Activated CD4-positive, alpha-beta T cell treated with anti-CD3 and anti-CD28 coated beads, Interleukin-2, amount 10 ng/mL, durations not matched to agents 24 days and 14 days (primary cell): ENCODE measurements at regions of chr12 and their contacts with region 1.

Region 1: DNA sequence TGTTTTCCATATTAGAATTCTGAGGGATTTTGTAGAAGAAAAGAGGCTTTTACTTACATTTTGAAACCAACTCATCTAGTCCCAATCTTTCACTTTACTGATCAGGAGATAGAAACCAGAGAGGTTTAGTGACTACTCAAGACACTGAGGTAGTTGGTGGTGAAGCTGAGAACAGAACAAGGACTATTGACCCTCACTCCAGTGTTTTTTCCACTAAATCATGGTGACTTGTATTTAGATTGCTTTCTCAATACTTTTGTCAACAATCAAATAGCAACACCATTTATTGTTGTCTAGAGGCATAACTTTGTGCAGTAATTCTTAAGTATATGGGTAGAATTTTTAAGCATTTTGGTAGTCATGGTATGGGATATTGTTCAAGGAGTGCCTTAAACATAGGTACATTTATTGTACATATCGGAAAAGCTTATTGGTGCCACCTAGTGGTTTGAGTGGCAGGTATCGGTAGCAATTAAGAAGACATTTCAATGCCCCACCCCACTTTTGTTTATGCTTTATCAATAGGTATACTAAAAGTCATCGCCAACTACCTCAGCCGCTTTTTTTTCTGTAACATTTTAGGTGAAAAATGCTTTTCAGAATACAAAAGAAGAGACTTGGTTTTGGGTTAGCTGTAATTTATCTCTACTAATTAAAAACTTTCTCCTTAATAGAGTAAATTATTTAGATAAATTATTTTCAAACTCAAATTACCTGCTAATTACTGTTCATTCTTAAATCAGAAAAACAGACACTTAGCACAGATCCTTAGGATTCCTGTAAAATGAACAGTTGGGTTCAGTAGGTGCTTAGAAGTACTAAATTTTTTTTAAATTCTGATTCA is 47.3 kb upstream of the PAWR start:
- DNase-seq: peak; percentile 76
- H3K4me3 Mint-ChIP-seq: no peak overlapping the region
- H3K27ac Mint-ChIP-seq: no peak overlapping the region
- H3K4me1 Mint-ChIP-seq: no peaks in the 10 kb centered on the region
- H3K27me3 Mint-ChIP-seq: peaks cover 5% of the 10 kb centered on the region

Region 2: DNA sequence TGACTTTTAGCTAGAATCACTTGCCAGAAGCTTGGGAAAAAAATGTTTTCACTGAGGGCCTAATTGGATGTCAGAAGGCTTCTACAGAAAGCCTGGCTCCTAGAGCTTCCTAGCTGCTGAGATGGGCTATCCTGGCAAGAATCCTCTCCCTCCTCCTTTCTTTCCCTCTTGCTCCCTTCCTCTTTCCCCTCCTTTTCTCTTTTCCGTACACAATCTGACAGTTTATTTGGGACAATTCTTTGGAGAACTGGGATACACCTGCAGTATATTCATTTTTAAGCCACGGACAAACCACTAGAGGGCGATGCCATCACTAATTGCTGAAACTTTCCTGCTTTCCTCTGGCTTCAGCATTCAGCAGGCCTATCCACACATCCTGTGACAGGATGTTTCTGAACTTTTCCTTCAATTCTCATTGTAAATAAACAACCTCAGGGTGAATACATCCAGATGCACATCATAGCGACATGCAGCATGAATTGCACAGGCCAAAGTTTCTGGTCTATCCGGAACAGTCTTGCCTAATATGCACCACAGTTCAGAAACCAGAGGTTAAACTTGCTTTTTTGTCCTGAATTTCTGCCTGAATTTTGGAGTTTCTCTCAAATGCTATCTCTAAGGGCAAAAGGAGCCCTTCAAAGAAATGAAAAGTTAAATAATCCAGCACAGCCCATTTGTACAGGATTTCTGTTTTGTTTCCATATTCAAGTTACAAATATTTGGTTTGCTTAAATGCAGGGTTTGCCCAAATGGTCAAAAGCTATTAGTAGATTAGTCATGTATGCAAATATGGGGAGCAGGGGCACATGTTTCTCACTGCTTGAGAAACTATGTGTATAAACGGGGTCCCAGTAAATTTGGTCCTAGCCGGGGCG is 190.1 kb before region 1 on chr12:
- intact Hi-C with region 1: loop called (anchors 2 kb)
- DNase-seq: peak; percentile 66
- H3K4me3 Mint-ChIP-seq: no peak overlapping the region
- H3K27ac Mint-ChIP-seq: no peak overlapping the region
- H3K4me1 Mint-ChIP-seq: no peaks in the 10 kb centered on the region
- H3K27me3 Mint-ChIP-seq: no peaks in the 10 kb centered on the region

Region 3: DNA sequence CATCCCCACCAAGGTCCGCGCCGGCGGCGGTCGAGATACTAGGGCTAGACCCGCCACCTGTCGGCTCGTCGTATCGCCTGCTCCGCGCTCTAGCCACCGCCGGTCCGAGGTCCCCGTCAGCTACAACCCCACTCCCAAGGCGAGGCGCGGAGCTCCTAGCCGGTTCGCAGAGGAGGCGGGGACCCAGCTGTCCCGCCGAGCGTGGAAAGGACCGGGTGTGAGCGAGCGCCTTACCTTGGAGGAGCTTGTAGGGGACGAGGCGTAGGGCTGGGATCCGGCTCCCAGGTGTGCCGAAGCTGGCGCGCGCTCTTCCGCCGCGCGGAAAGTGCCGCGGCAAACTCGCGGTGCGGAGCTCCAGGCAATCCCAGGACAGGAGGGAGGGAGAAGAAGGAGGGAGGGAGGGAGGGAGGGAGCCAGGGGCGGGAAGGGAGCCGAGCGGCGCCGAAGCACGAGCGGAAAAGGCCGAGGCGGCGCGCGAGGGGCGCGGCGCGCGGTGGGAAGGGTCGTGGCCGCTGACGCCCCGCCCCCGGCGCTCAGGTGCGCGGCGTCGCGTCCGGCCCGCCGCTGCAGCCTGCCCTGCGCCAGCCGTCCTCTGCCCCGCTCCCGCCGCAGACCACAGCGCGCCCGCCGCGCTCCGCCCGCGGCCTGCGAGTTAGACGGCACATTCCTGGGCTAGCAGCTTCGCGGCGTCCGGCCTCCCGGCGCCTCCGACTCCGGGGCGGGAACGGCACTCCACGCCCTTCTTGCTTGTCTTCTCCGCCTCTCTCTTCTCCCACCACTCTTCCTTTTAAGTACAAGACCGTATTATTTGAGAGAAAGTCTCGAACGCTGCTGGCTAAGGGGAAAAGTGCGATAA is 47.2 kb before region 1 on chr12 and contains the start of gene PAWR:
- intact Hi-C with region 1: no loop called
- DNase-seq: peak; percentile 73
- H3K4me3 Mint-ChIP-seq: peak within 1 kb of the TSS; percentile 86
- H3K27ac Mint-ChIP-seq: peak within 1 kb of the TSS; percentile 32
- H3K4me1 Mint-ChIP-seq: peaks cover 8% of the 10 kb centered on the region
- H3K27me3 Mint-ChIP-seq: peaks cover 55% of the 10 kb centered on the region
- total RNA-seq, gene PAWR: 7.1 and 7.5 TPM in 2 replicates

Region 4: GRCh38 chr12:80101126-80101525 is 363.0 kb after region 1 on chr12:
- intact Hi-C with region 1: no loop called
- DNase-seq: no peak
- H3K4me3 Mint-ChIP-seq: no peak overlapping the region
- H3K27ac Mint-ChIP-seq: no peak overlapping the region
- H3K4me1 Mint-ChIP-seq: no peaks in the 10 kb centered on the region
- H3K27me3 Mint-ChIP-seq: no peaks in the 10 kb centered on the region